Naive thymus-derived CD4-positive, alpha-beta T cell (primary cell): ENCODE measurements at regions of chr16 and their contacts with region 1.

Region 1: GRCh38 chr16:15888072-15888976 is at the start of gene CEP20:
- DNase-seq: peak; percentile 98 to 100 (median 99)
- ATAC-seq: peak; percentile 100
- H3K4me3 ChIP-seq: peak within 1 kb of the TSS; percentile 95
- H3K4me3 Mint-ChIP-seq: peak within 1 kb of the TSS; percentile 96 to 100 (median 99)
- H3K27ac ChIP-seq: peak within 1 kb of the TSS; percentile 89
- H3K27ac Mint-ChIP-seq: peak within 1 kb of the TSS; percentile 94 to 100 (median 97)
- H3K4me1 ChIP-seq: peaks cover 15 to 17% of the 10 kb centered on the region in 2 donors
- H3K4me1 Mint-ChIP-seq: peaks cover 26 to 47% (median 39%) of the 10 kb centered on the region in 7 donors
- H3K27me3 ChIP-seq: no peaks in the 10 kb centered on the region
- H3K27me3 Mint-ChIP-seq: no peaks in the 10 kb centered on the region
- total RNA-seq, gene CEP20: 15.4 to 34.6 (median 27.8) TPM

Region 2: DNA sequence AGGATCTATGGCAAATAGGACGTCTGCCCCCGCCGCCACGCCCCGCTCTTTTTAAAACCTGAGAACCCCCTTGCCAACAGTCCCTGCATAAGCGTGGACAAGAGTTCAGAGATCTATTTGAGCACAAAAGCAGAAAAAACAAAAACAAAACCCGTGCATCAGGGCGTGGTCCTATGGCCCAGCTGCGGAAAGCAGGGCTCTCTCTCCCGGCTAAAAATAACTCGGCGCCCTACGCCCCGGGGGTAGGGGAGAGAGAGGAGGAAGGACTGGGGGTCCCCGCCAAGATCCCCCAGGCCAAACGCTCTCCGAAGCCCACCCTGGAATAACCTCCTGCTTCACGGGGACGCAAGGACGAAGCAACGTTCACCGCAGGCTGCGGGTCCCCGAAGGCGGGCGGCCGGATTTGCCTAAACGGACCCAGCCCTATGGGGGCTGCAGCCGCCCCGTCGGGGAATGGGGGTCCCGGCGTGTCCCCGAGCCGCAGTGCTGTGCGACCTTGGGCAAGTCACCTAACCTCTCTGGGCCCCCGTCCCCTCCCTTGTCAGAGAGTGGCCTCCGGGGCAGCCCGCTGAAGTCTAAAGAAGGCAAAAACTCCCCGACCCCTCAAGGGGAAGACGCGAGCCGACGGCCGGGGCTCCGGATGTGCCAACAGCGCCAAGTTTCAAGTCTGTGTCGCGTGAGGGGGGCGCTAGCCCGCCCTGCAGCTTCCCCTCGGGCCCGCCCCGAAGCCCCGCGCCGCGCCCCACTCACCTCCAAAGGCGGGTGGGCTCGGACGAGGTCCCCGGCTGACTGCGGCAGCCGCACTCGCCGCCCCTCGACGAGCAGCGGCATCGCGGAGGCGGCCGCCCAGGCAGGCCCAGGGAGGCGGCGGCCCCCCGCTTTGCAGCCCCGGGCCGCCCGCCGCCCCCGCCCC is 832.9 kb before region 1 on chr16:
- CTCF ChIA-PET with region 1: no interaction called
- POLR2A ChIA-PET with region 1: no interaction called
- intact Hi-C with region 1: loop called in 1 of 2 experiments (anchors 1 kb)
- DNase-seq: peak in 3 of 9 donors; percentile 7 to 85 (median 77)
- ATAC-seq: peak; percentile 75
- H3K4me3 ChIP-seq: peak overlapping the region; percentile 83
- H3K4me3 Mint-ChIP-seq: peak overlapping the region; percentile 76 to 93 (median 88)
- H3K27ac ChIP-seq: peak overlapping the region; percentile 80
- H3K27ac Mint-ChIP-seq: peak overlapping the region; percentile 7 to 93 (median 78)
- H3K4me1 ChIP-seq: peaks cover 8 to 12% of the 10 kb centered on the region in 2 donors
- H3K4me1 Mint-ChIP-seq: peaks cover 12 to 28% (median 21%) of the 10 kb centered on the region in 7 donors
- H3K27me3 ChIP-seq: no peaks in the 10 kb centered on the region
- H3K27me3 Mint-ChIP-seq: no peaks in the 10 kb centered on the region

Region 3: DNA sequence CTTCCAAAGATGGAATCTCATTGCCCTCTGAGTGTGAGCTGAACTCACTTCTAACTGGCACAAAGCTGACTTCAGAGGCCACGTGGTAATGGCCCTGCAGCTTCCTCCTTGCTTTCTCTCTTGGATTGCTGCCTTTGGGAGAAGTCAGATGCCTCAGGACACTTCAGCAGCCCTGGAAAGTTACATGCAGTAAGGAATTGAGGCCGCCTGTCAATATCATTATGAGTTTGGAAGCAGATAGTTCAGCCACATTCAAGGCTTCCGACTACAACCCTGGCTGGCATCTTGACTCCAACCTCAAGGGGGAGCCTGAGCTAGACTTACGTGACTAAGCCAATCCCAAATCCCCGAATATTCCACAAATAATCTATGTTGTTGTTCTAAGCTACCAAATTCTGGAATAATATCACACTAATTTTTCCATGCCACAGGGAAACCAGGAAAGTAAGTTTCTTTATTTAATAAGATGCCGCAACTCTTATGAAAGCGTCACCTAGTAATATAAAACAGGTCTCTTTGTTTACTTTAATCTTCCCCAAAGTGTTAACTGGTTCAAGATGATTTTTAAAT is 13.5 kb before region 1 on chr16:
- CTCF ChIA-PET with region 1: interaction called, 5 read pairs
- POLR2A ChIA-PET with region 1: interaction called, 10 read pairs
- intact Hi-C with region 1: no loop called
- DNase-seq: peak in 2 of 9 donors; percentile 5 to 7
- ATAC-seq: no peak
- H3K4me3 ChIP-seq: no peak overlapping the region
- H3K4me3 Mint-ChIP-seq: no peak overlapping the region
- H3K27ac ChIP-seq: no peak overlapping the region
- H3K27ac Mint-ChIP-seq: peak overlapping the region in 2 of 9 donors; percentile 7 to 33
- H3K4me1 ChIP-seq: no peaks in the 10 kb centered on the region
- H3K4me1 Mint-ChIP-seq: peaks cover 0 to 12% (median 5%) of the 10 kb centered on the region in 7 donors
- H3K27me3 ChIP-seq: no peaks in the 10 kb centered on the region
- H3K27me3 Mint-ChIP-seq: no peaks in the 10 kb centered on the region

Region 4: GRCh38 chr16:15949210-15950160 is 61.2 kb after region 1 on chr16 and contains the start of gene ABCC1:
- CTCF ChIA-PET with region 1: interaction called, 3 read pairs
- POLR2A ChIA-PET with region 1: interaction called, 11 read pairs
- intact Hi-C with region 1: loop called (anchors 1 kb)
- DNase-seq: peak; percentile 21 to 69 (median 55)
- ATAC-seq: peak; percentile 80
- H3K4me3 ChIP-seq: peak within 1 kb of the TSS; percentile 83
- H3K4me3 Mint-ChIP-seq: peak within 1 kb of the TSS; percentile 91 to 100 (median 97)
- H3K27ac ChIP-seq: peak within 1 kb of the TSS; percentile 99
- H3K27ac Mint-ChIP-seq: peak within 1 kb of the TSS; percentile 93 to 99 (median 98)
- H3K4me1 ChIP-seq: peaks cover 11 to 15% of the 10 kb centered on the region in 2 donors
- H3K4me1 Mint-ChIP-seq: peaks cover 31 to 47% (median 39%) of the 10 kb centered on the region in 7 donors
- H3K27me3 ChIP-seq: no peaks in the 10 kb centered on the region
- H3K27me3 Mint-ChIP-seq: no peaks in the 10 kb centered on the region
- total RNA-seq, gene ABCC1: 57.3 to 95.8 (median 64.1) TPM

Region 5: DNA sequence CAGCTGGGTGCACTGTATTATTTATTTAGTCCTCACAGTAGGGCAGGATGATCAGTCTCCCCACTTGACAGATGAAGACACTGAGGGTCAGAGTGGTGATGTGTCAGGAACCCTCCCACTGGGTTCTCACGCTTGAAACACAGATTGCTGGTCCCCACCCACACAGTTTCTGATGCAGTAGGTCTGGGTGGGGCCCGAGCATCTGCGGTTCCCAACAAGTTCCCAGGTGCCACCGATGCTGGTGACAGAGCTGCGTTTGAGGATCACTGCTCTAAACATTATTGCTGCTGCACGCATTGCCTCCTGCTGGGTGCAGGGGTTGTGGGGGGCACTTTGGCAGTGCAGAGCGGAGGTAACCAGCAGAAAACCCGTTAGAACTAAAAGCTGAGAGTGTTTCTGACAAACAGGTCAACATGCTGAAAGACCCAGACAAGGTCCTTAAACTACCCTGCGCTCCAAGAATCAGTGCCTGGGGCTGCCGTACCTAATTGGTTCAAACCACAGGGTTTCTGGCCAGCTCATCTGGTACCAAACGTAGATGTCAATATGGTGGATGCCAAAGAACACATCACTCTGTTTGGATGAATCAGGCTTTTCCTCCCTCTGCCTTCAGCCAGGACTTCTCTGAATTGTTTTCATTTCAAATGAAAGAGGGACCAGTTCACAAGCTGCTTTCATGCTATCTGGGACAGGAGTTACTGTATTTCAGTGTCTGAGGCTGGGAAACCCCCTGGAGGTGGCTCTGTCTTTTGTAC is 137.1 kb after region 1 on chr16:
- CTCF ChIA-PET with region 1: no interaction called
- POLR2A ChIA-PET with region 1: no interaction called
- intact Hi-C with region 1: loop called in 1 of 2 experiments (anchors 5 kb)
- DNase-seq: peak in 3 of 9 donors; percentile 19 to 44 (median 41)
- ATAC-seq: peak; percentile 81
- H3K4me3 ChIP-seq: no peak overlapping the region
- H3K4me3 Mint-ChIP-seq: peak overlapping the region in 1 of 10 donors; percentile 66
- H3K27ac ChIP-seq: peak overlapping the region; percentile 16
- H3K27ac Mint-ChIP-seq: peak overlapping the region; percentile 51 to 85 (median 74)
- H3K4me1 ChIP-seq: peaks cover 9 to 14% of the 10 kb centered on the region in 2 donors
- H3K4me1 Mint-ChIP-seq: peaks cover 14 to 46% (median 19%) of the 10 kb centered on the region in 7 donors
- H3K27me3 ChIP-seq: no peaks in the 10 kb centered on the region
- H3K27me3 Mint-ChIP-seq: no peaks in the 10 kb centered on the region

Region 6: GRCh38 chr16:16033208-16033717 is 144.9 kb after region 1 on chr16:
- CTCF ChIA-PET with region 1: interaction called, 3 read pairs
- POLR2A ChIA-PET with region 1: interaction called, 4 read pairs
- intact Hi-C with region 1: loop called (anchors 1 to 5 kb)
- DNase-seq: peak in 7 of 9 donors; percentile 14 to 45 (median 25)
- ATAC-seq: peak; percentile 83
- H3K4me3 ChIP-seq: no peak overlapping the region
- H3K4me3 Mint-ChIP-seq: peak overlapping the region in 8 of 10 donors; percentile 8 to 42 (median 35)
- H3K27ac ChIP-seq: peak overlapping the region; percentile 3
- H3K27ac Mint-ChIP-seq: peak overlapping the region; percentile 5 to 92 (median 77)
- H3K4me1 ChIP-seq: peaks cover 9 to 17% of the 10 kb centered on the region in 2 donors
- H3K4me1 Mint-ChIP-seq: peaks cover 7 to 28% (median 26%) of the 10 kb centered on the region in 7 donors
- H3K27me3 ChIP-seq: no peaks in the 10 kb centered on the region
- H3K27me3 Mint-ChIP-seq: no peaks in the 10 kb centered on the region